ENCODE measurements at regions of chr14 and their contacts with region 1.

Region 1: DNA sequence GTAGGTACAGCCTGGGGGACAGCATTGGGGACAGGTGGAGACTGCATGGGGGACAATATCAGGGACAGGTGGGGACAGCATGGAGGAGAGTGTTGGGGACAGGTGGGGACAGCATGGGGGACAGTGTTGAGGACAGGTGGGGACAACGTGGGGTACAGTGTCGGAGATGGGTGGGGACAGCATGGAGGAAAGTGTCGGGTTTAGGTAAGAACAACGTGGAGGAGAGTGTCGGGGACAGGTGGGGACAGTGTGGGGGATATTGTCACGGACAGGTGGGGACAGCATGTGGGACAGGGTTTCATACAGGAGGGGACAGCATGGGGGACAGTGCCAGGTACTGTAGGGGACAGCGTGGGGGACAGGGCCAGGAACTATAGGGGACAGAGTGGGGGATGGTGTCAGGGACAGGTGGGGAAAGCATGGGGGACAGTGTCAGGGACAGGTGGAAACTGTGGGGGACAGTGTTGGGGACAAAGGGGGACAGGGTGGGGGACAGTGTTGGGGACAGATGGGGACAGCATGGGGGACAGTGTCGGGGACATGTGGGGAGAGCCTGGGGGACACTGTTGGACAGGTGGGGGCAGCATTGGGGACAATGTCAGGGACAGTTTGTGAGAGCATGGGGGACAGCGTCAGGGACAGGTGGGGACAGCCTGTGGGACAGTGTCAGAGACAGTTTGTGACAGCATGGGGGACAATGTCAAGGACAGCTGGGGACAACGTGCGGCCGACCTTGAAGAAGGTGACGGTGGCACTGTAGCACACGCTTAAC is 213.1 kb downstream of the TMEM121 start:
- DNase-seq: no peak
- ATAC-seq: no peak
- H3K4me3 ChIP-seq: no peak overlapping the region
- H3K4me3 Mint-ChIP-seq: no peak overlapping the region
- H3K27ac ChIP-seq: no peak overlapping the region
- H3K27ac Mint-ChIP-seq: no peak overlapping the region
- H3K4me1 ChIP-seq: no peaks in the 10 kb centered on the region
- H3K4me1 Mint-ChIP-seq: no peaks in the 10 kb centered on the region
- H3K27me3 ChIP-seq: no peaks in the 10 kb centered on the region
- H3K27me3 Mint-ChIP-seq: no peaks in the 10 kb centered on the region
- CTCF ChIP-seq: no peak

Region 2: GRCh38 chr14:105414456-105415371 is 324.8 kb before region 1 on chr14:
- CTCF ChIA-PET with region 1: no interaction called
- POLR2A ChIA-PET with region 1: no interaction called
- intact Hi-C with region 1: no loop called
- DNase-seq: peak; percentile 27 to 79 (median 57)
- ATAC-seq: peak; percentile 82
- H3K4me3 ChIP-seq: peak overlapping the region; percentile 24 to 69
- H3K4me3 Mint-ChIP-seq: peak overlapping the region; percentile 80
- H3K27ac ChIP-seq: no peak overlapping the region
- H3K27ac Mint-ChIP-seq: no peak overlapping the region
- H3K4me1 ChIP-seq: peaks cover 26% of the 10 kb centered on the region
- H3K4me1 Mint-ChIP-seq: peaks cover 14% of the 10 kb centered on the region
- H3K27me3 ChIP-seq: peaks cover 4 to 12% of the 10 kb centered on the region in 2 experiments
- H3K27me3 Mint-ChIP-seq: peaks cover 9% of the 10 kb centered on the region
- CTCF ChIP-seq: peak; percentile 92

Region 3: DNA sequence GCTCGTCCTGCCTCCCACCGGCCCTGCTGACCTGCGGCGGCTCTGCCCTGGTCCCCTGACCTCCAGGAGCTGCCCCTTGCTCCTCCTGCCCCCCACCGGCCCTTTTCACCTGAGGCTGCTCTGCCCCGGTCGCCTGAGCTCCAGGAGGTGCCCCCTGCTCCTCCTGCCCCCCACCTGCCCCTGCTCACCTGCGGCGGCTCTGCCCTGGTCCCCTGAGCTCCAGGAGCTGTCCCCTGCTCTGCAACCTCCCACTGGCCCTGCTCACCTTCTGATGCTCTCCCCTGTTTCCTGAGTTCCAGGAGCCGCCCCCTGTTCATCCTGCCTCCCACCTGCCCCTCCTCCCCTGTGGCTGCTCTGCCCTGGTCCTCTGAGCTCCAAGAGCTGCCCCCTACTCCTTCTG is 111.8 kb before region 1 on chr14:
- CTCF ChIA-PET with region 1: no interaction called
- POLR2A ChIA-PET with region 1: no interaction called
- intact Hi-C with region 1: loop called in 1 of 2 experiments (anchors 5 kb)
- DNase-seq: peak in 1 of 9 experiments; percentile 2
- ATAC-seq: no peak
- H3K4me3 ChIP-seq: no peak overlapping the region
- H3K4me3 Mint-ChIP-seq: no peak overlapping the region
- H3K27ac ChIP-seq: no peak overlapping the region
- H3K27ac Mint-ChIP-seq: no peak overlapping the region
- H3K4me1 ChIP-seq: no peaks in the 10 kb centered on the region
- H3K4me1 Mint-ChIP-seq: no peaks in the 10 kb centered on the region
- H3K27me3 ChIP-seq: no peaks in the 10 kb centered on the region
- H3K27me3 Mint-ChIP-seq: peaks cover 11% of the 10 kb centered on the region
- CTCF ChIP-seq: no peak